Activated T-helper 2 cell treated with anti-CD3 and anti-CD28 coated beads, Interferon-gamma antibody, Interleukin-2, Interleukin-4, amounts not matched to agents 10 μg/mL and 5 μg/mL and 100 μg/mL, durations not matched to agents 14 hours and 24 hours and 36 hours (primary cell): ENCODE measurements at regions of chrX and their contacts with region 1.

Region 1: DNA sequence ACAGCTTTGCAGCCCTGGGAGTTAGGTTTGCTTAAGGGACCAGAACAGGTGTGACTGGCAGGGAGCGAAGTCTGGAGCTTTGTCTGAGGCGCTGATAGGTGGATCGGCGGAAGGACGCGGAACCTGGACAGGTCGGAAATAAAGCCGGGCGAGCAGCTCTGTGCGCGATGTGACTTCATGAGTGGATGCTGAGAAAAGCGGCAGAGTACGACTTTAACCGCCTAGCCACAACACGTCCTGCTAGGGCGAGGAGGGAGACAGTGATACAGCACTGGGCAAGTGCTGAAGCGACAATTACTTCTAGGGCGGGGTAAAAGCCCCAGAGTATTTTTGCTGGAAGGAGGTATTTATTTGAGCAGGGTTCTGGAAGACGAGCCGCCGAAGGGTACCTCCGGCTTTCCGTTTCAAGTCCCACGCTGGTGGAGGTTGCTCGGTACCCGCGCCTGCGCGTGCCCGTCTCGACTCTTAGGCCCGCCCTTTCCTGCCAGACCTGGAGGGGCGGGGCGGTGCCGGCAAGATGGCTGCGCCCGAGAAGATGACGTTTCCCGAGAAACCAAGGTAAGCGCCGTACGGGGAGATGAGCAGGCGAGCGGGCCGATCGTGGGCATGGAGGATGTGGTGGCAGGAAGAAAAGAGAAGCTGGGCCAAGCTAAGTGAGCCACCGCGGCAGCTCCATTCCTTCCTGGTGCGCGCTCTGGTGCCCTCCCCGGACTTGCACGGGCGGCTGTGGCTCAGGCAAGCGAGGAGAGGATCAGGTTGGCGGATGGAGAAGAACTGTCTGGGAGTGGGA is at the start of gene ZRSR2:
- DNase-seq: peak; percentile 83
- H3K4me3 Mint-ChIP-seq: no peak within 1 kb of the TSS
- H3K27ac Mint-ChIP-seq: no peak within 1 kb of the TSS
- H3K4me1 Mint-ChIP-seq: peaks cover 12% of the 10 kb centered on the region
- H3K27me3 Mint-ChIP-seq: no peaks in the 10 kb centered on the region
- total RNA-seq, gene ZRSR2: 18.7 and 20.3 TPM in 2 replicates

Region 2: DNA sequence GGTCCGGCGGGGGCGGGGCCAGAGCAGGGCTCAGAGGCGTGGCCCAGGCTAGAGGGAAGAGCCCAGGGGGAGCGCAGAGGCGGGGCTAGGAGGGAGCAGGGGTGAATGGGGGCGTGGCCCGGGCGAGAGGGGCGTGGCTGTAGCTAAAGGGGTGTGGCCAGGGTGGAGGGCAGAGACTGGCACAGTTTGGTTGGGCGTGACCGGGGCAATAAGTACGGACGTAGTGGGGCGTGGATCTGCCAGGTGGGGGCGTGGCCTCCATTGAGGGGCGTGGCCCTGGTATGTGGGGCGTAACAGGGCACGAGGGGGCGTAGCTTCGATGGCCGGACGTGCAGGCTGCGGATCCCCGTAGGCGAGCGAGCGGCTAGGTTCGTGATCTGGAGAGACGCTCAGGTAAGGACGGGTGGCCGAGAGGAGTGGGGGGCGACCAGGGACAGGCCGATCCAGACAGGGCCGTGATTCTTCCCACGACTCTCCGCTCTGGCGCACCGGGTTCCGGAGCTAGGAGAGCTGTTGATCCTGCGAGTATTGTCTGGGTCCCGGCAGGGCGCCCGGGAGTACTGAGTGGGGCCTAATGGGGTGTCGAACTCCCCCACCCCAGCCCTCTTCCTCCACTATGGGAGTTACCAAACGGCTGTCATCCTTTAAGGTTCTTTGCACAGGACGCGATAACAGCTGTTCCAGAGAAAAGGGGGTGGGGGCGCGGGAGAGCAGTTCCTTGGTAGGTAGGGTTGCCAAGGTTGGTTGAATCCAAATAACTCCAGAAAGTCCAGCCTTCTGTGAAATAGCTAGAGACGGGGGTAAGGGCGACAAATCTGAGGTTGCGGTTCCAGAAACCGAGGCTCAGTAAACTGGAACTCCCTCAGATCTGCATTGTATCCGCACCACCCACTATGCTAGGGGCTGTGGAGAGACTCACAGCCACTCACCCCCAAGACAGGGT is 51.9 kb before region 1 on chrX and contains the start of gene CA5B:
- intact Hi-C with region 1: loop called (anchors 1 kb)
- DNase-seq: peak; percentile 94
- H3K4me3 Mint-ChIP-seq: peak within 1 kb of the TSS; percentile 82
- H3K27ac Mint-ChIP-seq: peak within 1 kb of the TSS; percentile 75
- H3K4me1 Mint-ChIP-seq: peaks cover 23% of the 10 kb centered on the region
- H3K27me3 Mint-ChIP-seq: no peaks in the 10 kb centered on the region
- total RNA-seq, gene CA5B: 5.2 and 8.0 TPM in 2 replicates

Region 3: GRCh38 chrX:15815779-15816437 is 25.7 kb after region 1 on chrX:
- intact Hi-C with region 1: loop called (anchors 1 kb)
- DNase-seq: peak; percentile 15
- H3K4me3 Mint-ChIP-seq: no peak overlapping the region
- H3K27ac Mint-ChIP-seq: peak overlapping the region; percentile 92
- H3K4me1 Mint-ChIP-seq: peaks cover 41% of the 10 kb centered on the region
- H3K27me3 Mint-ChIP-seq: no peaks in the 10 kb centered on the region

Region 4: DNA sequence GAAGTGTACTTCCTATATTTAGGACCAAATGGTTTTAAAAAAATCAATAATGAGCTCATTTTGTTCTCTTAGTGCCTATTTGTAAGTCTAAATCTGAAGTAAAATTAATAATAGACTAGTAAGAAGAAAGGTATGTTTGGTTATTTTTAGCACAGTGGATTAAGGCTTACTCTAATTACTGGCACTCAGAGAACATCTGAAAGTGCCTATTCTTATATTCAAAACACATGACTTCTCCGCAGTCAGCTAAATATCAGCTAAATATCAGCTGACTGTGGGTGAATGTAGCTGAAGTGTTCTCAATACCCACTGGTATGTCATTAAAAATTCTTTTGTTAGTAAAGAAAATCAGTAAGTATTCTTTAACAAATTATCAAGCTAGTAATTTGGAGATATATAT is 58.4 kb after region 1 on chrX:
- intact Hi-C with region 1: no loop called
- DNase-seq: no peak
- H3K4me3 Mint-ChIP-seq: no peak overlapping the region
- H3K27ac Mint-ChIP-seq: no peak overlapping the region
- H3K4me1 Mint-ChIP-seq: peaks cover 19% of the 10 kb centered on the region
- H3K27me3 Mint-ChIP-seq: no peaks in the 10 kb centered on the region